ENCODE measurements at regions of chr1 and their contacts with region 1.

Region 1: GRCh38 chr1:101238681-101239094 is 1.9 kb downstream of the S1PR1 start:
- DNase-seq: peak; percentile 96
- H3K4me3 Mint-ChIP-seq: peak overlapping the region; percentile 90
- H3K27ac Mint-ChIP-seq: peak overlapping the region; percentile 96
- H3K4me1 Mint-ChIP-seq: peaks cover 52% of the 10 kb centered on the region
- H3K27me3 Mint-ChIP-seq: no peaks in the 10 kb centered on the region

Region 2: GRCh38 chr1:100351095-100351891 is 887.4 kb before region 1 on chr1:
- intact Hi-C with region 1: loop called (anchors 5 kb)
- DNase-seq: peak; percentile 96
- H3K4me3 Mint-ChIP-seq: peak overlapping the region; percentile 96
- H3K27ac Mint-ChIP-seq: peak overlapping the region; percentile 98
- H3K4me1 Mint-ChIP-seq: peaks cover 42% of the 10 kb centered on the region
- H3K27me3 Mint-ChIP-seq: no peaks in the 10 kb centered on the region

Region 3: DNA sequence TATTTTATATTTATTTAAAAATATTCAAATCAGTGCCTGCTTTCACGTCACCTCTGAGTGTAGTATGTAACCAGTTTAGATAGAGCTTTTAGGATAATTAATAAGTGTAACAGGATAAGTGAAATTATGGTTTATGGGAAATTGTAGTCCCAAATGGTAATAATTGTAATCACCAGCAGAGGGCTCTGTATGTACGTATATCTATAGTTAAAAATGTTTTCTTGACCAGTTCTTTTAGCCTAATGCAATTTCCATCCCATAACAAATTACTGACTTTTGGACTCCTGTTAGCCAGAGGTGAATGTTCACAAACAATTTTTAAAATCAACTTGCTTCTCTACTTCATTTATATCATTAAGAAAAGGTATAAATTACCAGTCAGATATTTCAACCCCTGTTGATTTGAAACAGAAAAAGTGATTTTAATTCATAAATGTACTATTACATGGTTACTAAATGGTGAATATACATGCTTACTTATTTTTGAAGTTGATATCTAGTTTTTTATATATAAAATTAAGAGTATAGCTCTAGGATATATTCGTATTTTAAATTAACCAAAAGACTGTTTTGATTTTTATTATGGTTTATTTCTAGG is 317.5 kb before region 1 on chr1:
- intact Hi-C with region 1: loop called (anchors 1 kb)
- DNase-seq: peak; percentile 70
- H3K4me3 Mint-ChIP-seq: no peak overlapping the region
- H3K27ac Mint-ChIP-seq: no peak overlapping the region
- H3K4me1 Mint-ChIP-seq: peaks cover 25% of the 10 kb centered on the region
- H3K27me3 Mint-ChIP-seq: no peaks in the 10 kb centered on the region

Region 4: DNA sequence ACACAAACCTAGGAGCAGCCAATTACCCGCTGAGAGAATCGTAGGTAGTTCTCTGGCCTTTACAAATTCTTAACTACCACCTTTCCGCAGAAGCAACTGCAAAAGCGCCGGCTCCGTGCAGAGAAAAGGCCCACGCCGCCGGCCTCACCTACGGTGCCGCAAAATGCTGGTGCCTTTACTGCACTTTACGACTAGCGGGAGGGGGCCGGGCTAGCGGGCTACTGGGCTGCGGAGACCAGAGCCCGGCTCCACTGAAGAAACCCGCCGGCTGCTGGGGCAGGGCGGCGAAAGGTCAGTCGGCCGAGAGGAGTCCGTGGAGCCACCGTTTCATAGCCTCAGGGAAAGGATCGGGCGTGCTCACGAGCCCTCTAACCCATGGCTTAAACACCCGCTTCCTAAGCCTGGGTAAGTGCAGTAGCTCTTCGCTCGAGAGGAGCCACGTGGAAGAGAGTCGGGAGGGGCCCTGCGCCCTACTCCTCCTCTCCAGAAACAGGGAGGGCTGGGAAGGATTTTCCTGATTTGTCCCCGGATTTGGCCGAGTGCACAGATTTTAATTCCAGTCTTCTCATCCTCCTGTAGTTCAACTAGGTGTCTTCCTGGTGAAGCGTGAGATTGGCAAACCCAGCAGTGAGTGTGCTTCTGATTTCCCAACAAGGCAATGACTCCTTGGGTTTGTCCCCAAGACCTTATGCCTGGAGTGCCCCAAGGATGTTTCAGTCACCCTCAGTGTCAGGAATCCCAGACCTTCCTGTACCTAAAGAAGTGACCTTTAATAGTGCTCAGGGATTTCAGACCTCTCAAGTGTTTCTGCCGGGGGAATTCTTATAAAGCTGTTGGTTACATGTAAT is 212.8 kb before region 1 on chr1 and contains the start of gene DPH5:
- intact Hi-C with region 1: loop called (anchors 1 kb)
- DNase-seq: peak; percentile 97
- H3K4me3 Mint-ChIP-seq: peak within 1 kb of the TSS; percentile 100
- H3K27ac Mint-ChIP-seq: peak within 1 kb of the TSS; percentile 98
- H3K4me1 Mint-ChIP-seq: peaks cover 42% of the 10 kb centered on the region
- H3K27me3 Mint-ChIP-seq: no peaks in the 10 kb centered on the region
- total RNA-seq, gene DPH5: 37.5 and 41.0 TPM in 2 replicates

Region 5: GRCh38 chr1:101051688-101052638 is 186.7 kb before region 1 on chr1:
- intact Hi-C with region 1: no loop called
- DNase-seq: no peak
- H3K4me3 Mint-ChIP-seq: no peak overlapping the region
- H3K27ac Mint-ChIP-seq: no peak overlapping the region
- H3K4me1 Mint-ChIP-seq: peaks cover 9% of the 10 kb centered on the region
- H3K27me3 Mint-ChIP-seq: no peaks in the 10 kb centered on the region

Region 6: DNA sequence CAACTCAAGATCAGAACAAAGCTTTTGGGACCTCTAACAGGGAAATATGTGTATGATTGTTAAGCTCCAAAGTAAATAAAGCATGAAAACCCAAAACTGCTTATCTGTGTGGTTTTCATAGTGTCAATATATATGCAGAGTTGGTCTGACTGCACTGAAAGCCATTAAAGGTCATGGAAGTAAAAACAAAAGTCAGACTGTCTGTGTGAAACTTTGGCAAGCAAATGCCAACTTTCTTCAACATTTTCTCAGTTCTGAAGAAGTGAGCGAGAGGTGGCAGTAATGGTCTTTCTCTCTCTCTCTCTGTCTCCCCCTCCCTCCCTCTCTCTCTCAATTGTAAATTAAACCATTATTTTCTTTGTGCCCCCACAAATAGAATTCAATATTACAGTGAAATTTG is 101.9 kb before region 1 on chr1:
- intact Hi-C with region 1: loop called (anchors 1 kb)
- DNase-seq: peak; percentile 79
- H3K4me3 Mint-ChIP-seq: peak overlapping the region; percentile 67
- H3K27ac Mint-ChIP-seq: peak overlapping the region; percentile 80
- H3K4me1 Mint-ChIP-seq: peaks cover 65% of the 10 kb centered on the region
- H3K27me3 Mint-ChIP-seq: peaks cover 1% of the 10 kb centered on the region

Region 7: DNA sequence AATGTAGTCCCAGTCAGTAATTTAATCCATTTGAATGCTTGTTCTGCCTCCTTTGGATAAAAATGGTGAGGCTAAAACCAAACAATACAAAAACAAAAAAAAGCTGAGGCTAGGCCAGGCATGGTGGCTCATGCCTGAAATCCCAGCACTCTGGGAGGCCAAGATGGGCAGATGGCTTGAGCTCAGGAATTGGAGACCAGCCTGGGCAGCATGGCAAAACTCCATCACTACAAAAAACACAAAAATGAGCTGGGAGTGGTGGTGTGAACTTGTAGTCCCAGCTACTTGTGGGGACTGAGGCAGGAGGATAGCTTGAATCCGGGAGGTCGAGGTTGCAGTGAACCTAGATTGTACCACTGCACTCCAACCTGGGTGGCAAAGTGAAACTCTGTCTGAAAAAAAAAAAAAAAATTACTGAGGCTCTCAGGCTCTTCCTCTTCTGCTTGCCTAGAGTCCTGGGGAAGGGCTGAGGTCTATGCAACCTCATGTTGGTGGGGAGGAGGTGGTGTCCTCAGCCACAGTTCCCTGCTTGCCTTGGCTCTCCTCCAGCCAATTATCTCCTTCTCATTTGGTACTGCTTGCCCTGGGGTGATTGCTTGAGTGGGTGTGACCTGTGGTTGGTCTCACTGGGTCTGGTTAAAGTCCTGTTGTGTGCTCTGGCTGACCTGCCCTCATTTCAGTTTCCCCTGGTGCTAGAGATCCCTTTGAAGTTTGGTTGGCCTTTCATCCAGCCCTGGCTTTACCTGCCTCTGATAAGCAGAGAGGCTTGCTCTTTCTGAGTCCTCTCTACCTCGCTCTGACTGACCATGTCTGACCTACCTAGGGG is 19.0 kb after region 1 on chr1:
- intact Hi-C with region 1: loop called (anchors 2 kb)
- DNase-seq: peak; percentile 80
- H3K4me3 Mint-ChIP-seq: peak overlapping the region; percentile 42
- H3K27ac Mint-ChIP-seq: peak overlapping the region; percentile 68
- H3K4me1 Mint-ChIP-seq: peaks cover 52% of the 10 kb centered on the region
- H3K27me3 Mint-ChIP-seq: no peaks in the 10 kb centered on the region

Region 8: DNA sequence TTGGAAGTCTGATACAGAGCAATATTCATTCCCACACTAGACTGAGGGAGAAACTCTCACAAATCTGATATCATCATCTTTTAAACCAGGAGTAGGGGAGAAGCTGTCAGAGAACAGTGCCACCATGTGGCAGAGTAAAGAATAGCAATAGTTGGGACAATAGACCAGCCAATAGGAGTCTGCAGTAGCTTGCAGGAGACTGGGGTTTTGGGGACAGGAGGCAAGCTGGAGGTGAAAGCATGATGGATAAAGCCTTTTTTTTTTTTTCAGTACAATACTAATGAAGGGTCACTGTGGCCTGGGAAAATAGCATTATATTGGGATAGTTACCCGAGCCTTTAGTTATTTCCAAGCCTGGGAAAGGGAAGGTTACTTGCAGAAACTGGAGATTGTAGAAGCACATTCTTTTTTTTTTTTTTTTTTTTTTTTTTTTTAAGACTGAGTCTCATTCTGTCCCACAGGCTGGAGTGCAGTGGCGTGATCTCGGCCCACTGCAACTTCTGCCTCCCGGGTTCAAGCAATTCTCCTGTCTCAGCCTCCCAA is 118.8 kb after region 1 on chr1:
- intact Hi-C with region 1: loop called (anchors 10 kb)
- DNase-seq: peak; percentile 94
- H3K4me3 Mint-ChIP-seq: no peak overlapping the region
- H3K27ac Mint-ChIP-seq: no peak overlapping the region
- H3K4me1 Mint-ChIP-seq: peaks cover 7% of the 10 kb centered on the region
- H3K27me3 Mint-ChIP-seq: peaks cover 36% of the 10 kb centered on the region

Measured in activated CD4-positive, alpha-beta T cell treated with anti-CD3 and anti-CD28 coated beads, Interleukin-2, amount 10 ng/mL, durations not matched to agents 24 days and 14 days (primary cell).